SK-N-SH (cell line): ENCODE measurements at regions of chr13 and their contacts with region 1.

Region 1: DNA sequence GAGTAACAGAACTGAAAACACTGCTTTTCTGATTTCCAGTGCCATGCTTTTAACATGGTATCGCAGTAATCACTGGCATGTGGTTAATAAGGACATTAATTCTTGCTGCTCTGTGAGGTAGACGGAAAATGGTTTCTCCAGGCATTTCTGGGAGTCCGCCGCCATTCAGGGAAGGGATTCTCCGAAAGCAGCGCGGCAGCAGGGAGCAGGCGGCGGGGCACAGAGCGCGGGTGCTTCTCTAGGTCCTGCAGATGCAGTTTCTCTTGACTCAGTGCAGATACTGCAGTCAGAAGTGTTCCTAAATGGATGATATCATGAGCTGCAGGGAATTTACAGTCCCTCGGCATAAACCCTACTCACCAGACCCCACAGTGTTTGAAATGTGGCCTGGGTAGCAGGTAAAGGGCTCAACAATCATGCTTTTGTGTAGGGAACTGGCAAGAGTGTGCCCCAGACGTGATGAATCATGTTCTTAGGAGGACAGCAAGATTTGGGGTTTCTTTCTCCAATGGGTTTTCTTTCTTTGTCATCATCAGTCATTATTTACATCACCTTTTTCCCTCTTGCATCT is 338.6 kb upstream of the ARGLU1 start:
- DNase-seq: no peak
- H3K4me3 ChIP-seq: no peak overlapping the region
- H3K27ac ChIP-seq: no peak overlapping the region
- H3K4me1 ChIP-seq: no peaks in the 10 kb centered on the region
- H3K27me3 ChIP-seq: no peaks in the 10 kb centered on the region
- CTCF ChIP-seq: no peak
- EP300 ChIP-seq: no peak
- RAD21 ChIP-seq: no peak

Region 2: DNA sequence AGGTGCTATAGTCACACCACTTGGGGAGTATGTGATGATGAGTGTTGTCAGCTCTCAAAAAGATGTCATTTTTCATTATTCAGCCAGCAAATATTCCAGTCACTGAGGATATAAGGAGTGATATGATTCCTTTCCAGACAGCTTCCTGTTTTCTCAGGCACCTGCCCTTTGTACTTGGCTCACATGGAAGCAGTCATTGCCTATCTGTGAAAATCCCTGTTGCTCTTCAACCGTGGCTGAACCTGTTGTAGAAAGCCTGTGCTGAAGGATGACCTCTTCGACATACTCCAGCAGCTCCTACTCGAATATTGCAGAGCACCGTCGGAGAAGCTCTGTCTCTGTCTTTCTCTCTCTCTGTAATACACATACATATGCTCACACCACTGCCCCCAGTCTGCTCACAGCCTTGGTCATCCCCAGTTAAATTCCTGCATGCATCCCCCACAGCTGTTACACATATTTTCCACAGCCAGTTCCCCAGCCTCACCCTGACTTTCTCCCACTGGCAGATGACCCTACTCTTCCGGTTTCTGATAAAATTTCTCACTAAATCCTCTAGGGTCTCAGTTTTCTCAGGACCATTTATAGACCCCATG is 134.4 kb before region 1 on chr13:
- CTCF ChIA-PET with region 1: no interaction called
- POLR2A ChIA-PET with region 1: no interaction called
- DNase-seq: no peak
- H3K4me3 ChIP-seq: no peak overlapping the region
- H3K27ac ChIP-seq: no peak overlapping the region
- H3K4me1 ChIP-seq: no peaks in the 10 kb centered on the region
- H3K27me3 ChIP-seq: no peaks in the 10 kb centered on the region
- CTCF ChIP-seq: no peak
- EP300 ChIP-seq: no peak
- RAD21 ChIP-seq: no peak

Region 3: DNA sequence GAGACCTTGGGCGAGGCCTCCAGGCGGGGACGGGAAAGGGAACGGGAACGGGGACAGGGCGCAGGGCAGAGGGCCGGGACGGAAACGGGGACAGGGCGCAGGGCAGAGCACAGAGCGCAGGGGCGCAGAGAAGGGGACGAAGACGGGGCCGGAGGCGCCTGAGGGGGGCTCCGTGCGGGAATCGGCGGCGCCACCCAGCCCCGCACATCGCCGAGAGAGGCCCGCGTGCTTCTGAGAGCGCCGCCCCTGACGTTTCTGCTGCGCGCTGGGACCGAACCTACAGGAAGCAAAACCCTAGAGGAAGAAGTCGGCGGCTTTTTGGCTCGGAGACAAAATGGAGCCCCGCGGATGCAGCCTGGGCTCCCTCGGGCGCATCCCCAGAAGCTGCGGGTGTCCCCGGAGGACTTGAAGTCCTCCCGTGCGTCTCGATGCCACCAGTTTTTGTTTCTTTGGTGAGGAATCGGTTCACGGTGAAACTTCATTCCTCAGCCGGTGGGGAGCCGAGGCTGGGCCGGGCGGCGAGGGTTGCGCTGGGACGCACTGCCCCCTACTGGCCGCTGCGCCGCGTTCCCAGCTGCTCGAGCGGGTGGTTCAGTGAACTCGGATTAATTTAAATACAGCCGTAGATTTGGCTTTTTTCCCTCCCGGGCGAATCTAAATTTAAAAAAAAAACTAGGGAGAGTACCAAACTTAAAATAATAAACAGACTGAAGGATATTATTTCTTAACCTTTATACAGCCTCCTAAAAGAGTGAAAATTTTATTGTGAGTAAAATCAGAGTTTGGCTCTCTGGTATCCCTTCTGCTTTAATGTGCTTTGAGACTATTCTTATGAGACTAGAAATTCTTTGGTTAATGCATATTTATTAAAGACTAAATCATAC is 11.4 kb after region 1 on chr13:
- CTCF ChIA-PET with region 1: interaction called, 12 read pairs
- POLR2A ChIA-PET with region 1: no interaction called
- DNase-seq: peak; percentile 91
- H3K4me3 ChIP-seq: peak overlapping the region; percentile 65 to 76
- H3K27ac ChIP-seq: no peak overlapping the region; a peak in 1 of 4 replicates
- H3K4me1 ChIP-seq: no peaks in the 10 kb centered on the region; a peak in 1 of 4 replicates
- H3K27me3 ChIP-seq: no peaks in the 10 kb centered on the region
- CTCF ChIP-seq: peak; percentile 98
- EP300 ChIP-seq: no peak
- RAD21 ChIP-seq: peak; percentile 83

Region 4: GRCh38 chr13:107170270-107170931 is 263.9 kb after region 1 on chr13:
- CTCF ChIA-PET with region 1: no interaction called
- POLR2A ChIA-PET with region 1: no interaction called
- DNase-seq: peak; percentile 57
- H3K4me3 ChIP-seq: peak overlapping the region in 1 of 2 experiments; percentile 33; a peak in 2 of 4 replicates
- H3K27ac ChIP-seq: peak overlapping the region in 1 of 2 experiments; percentile 55; a peak in 2 of 4 replicates
- H3K4me1 ChIP-seq: peaks cover 0 to 4% of the 10 kb centered on the region in 2 experiments; a peak in 2 of 4 replicates
- H3K27me3 ChIP-seq: no peaks in the 10 kb centered on the region
- CTCF ChIP-seq: no peak
- EP300 ChIP-seq: no peak
- RAD21 ChIP-seq: no peak